ENCODE measurements at regions of chr3 and their contacts with region 1.

Region 1: GRCh38 chr3:96831175-96831574 is 16.8 kb downstream of the EPHA6 start:
- DNase-seq: no peak
- ATAC-seq: no peak
- H3K4me3 ChIP-seq: no peak overlapping the region
- H3K4me3 Mint-ChIP-seq: no peak overlapping the region
- H3K27ac ChIP-seq: no peak overlapping the region
- H3K27ac Mint-ChIP-seq: no peak overlapping the region
- H3K4me1 ChIP-seq: no peaks in the 10 kb centered on the region
- H3K4me1 Mint-ChIP-seq: no peaks in the 10 kb centered on the region
- H3K27me3 ChIP-seq: no peaks in the 10 kb centered on the region
- H3K27me3 Mint-ChIP-seq: no peaks in the 10 kb centered on the region
- CTCF ChIP-seq: no peak

Region 2: GRCh38 chr3:96869316-96869715 is 38.1 kb after region 1 on chr3:
- CTCF ChIA-PET with region 1: no interaction called
- POLR2A ChIA-PET with region 1: no interaction called
- intact Hi-C with region 1: no loop called
- DNase-seq: no peak
- ATAC-seq: no peak
- H3K4me3 ChIP-seq: no peak overlapping the region
- H3K4me3 Mint-ChIP-seq: no peak overlapping the region
- H3K27ac ChIP-seq: no peak overlapping the region
- H3K27ac Mint-ChIP-seq: no peak overlapping the region
- H3K4me1 ChIP-seq: no peaks in the 10 kb centered on the region
- H3K4me1 Mint-ChIP-seq: no peaks in the 10 kb centered on the region
- H3K27me3 ChIP-seq: no peaks in the 10 kb centered on the region
- H3K27me3 Mint-ChIP-seq: no peaks in the 10 kb centered on the region
- CTCF ChIP-seq: no peak

Region 3: DNA sequence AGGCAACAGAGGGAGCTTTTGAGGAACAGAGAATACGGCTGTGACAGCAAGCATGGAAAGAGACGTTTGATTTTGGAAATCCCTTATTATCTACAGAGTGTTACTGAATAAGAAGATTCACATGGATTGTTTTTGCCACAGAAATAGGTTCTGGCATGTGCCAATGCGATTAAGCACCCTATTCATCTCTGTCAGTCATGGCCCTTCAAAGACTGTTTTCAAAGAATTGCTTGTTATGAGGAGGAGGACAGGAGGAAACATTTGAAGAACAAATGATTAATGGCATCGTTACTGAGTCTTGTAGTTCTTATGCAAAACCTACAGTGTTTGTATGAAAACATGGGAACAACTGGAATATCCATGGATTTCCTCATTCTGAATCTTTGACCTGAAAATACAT is 69.4 kb after region 1 on chr3:
- CTCF ChIA-PET with region 1: no interaction called
- POLR2A ChIA-PET with region 1: no interaction called
- intact Hi-C with region 1: loop called in 1 of 2 experiments (anchors 5 kb)
- DNase-seq: no peak
- ATAC-seq: no peak
- H3K4me3 ChIP-seq: no peak overlapping the region
- H3K4me3 Mint-ChIP-seq: no peak overlapping the region
- H3K27ac ChIP-seq: no peak overlapping the region
- H3K27ac Mint-ChIP-seq: no peak overlapping the region
- H3K4me1 ChIP-seq: no peaks in the 10 kb centered on the region
- H3K4me1 Mint-ChIP-seq: no peaks in the 10 kb centered on the region
- H3K27me3 ChIP-seq: no peaks in the 10 kb centered on the region
- H3K27me3 Mint-ChIP-seq: no peaks in the 10 kb centered on the region
- CTCF ChIP-seq: no peak